ENCODE measurements at regions of chr19 and their contacts with region 1.

Region 1: GRCh38 chr19:29873024-29873800 is 61.4 kb downstream of the CCNE1 start:
- DNase-seq: no peak
- ATAC-seq: peak; percentile 89
- H3K4me3 ChIP-seq: peak overlapping the region; percentile 26 to 50
- H3K27ac ChIP-seq: peak overlapping the region; percentile 33; the same call in 1 of the 2 replicates
- H3K4me1 ChIP-seq: peaks cover 0 to 16% of the 10 kb centered on the region in 2 experiments; a peak in 3 of 4 replicates
- H3K27me3 ChIP-seq: no peaks in the 10 kb centered on the region
- CTCF ChIP-seq: peak; percentile 57 to 73 (median 71); a peak in 5 of 6 replicates
- POLR2A ChIP-seq: no peak
- RAD21 ChIP-seq: peak; percentile 74

Region 2: GRCh38 chr19:29724746-29725145 is 148.5 kb before region 1 on chr19:
- CTCF ChIA-PET with region 1: interaction called, 37 read pairs
- POLR2A ChIA-PET with region 1: no interaction called
- RAD21 ChIA-PET with region 1: no interaction called
- intact Hi-C with region 1: no loop called
- DNase-seq: no peak
- ATAC-seq: no peak
- H3K4me3 ChIP-seq: no peak overlapping the region
- H3K27ac ChIP-seq: no peak overlapping the region
- H3K4me1 ChIP-seq: no peaks in the 10 kb centered on the region
- H3K27me3 ChIP-seq: no peaks in the 10 kb centered on the region
- CTCF ChIP-seq: no peak
- POLR2A ChIP-seq: no peak
- RAD21 ChIP-seq: no peak

Region 3: GRCh38 chr19:29761575-29762232 is 111.5 kb before region 1 on chr19:
- CTCF ChIA-PET with region 1: interaction called, 14 read pairs
- POLR2A ChIA-PET with region 1: no interaction called
- RAD21 ChIA-PET with region 1: interaction called in 1 of 2 experiments, 4 read pairs
- intact Hi-C with region 1: loop called (anchors 5 kb)
- DNase-seq: no peak
- ATAC-seq: no peak
- H3K4me3 ChIP-seq: no peak overlapping the region
- H3K27ac ChIP-seq: no peak overlapping the region
- H3K4me1 ChIP-seq: peaks cover 0 to 10% of the 10 kb centered on the region in 2 experiments; a peak in 2 of 4 replicates
- H3K27me3 ChIP-seq: no peaks in the 10 kb centered on the region
- CTCF ChIP-seq: no peak
- POLR2A ChIP-seq: no peak
- RAD21 ChIP-seq: no peak

Region 4: GRCh38 chr19:29858000-29858596 is 15.1 kb before region 1 on chr19:
- CTCF ChIA-PET with region 1: interaction called, 15 read pairs
- POLR2A ChIA-PET with region 1: no interaction called
- RAD21 ChIA-PET with region 1: no interaction called
- intact Hi-C with region 1: loop called (anchors 1 kb)
- DNase-seq: no peak
- ATAC-seq: peak; percentile 91
- H3K4me3 ChIP-seq: no peak overlapping the region
- H3K27ac ChIP-seq: no peak overlapping the region
- H3K4me1 ChIP-seq: peaks cover 2 to 17% of the 10 kb centered on the region in 2 experiments; a peak in 3 of 4 replicates
- H3K27me3 ChIP-seq: no peaks in the 10 kb centered on the region
- CTCF ChIP-seq: peak; percentile 25 to 91 (median 82); a peak in 5 of 6 replicates
- POLR2A ChIP-seq: no peak
- RAD21 ChIP-seq: peak; percentile 54

Measured in HCT116 (cell line).